Esophagus muscularis mucosa (tissue), 4 donors: ENCODE measurements at regions of chr18 and their contacts with region 1.

Region 1: GRCh38 chr18:9366192-9366591 is 31.6 kb downstream of the TWSG1 start:
- DNase-seq: no peak
- H3K4me3 ChIP-seq: no peak overlapping the region
- H3K27ac ChIP-seq: peak overlapping the region in 3 of 4 donors; percentile 28 to 58 (median 33)
- H3K4me1 ChIP-seq: peaks cover 0 to 46% (median 35%) of the 10 kb centered on the region in 4 donors
- H3K27me3 ChIP-seq: no peaks in the 10 kb centered on the region
- CTCF ChIP-seq: peak; percentile 24 to 37 (median 24)
- EP300 ChIP-seq: no peak
- POLR2A ChIP-seq: no peak

Region 2: GRCh38 chr18:8319798-8320489 is 1046.2 kb before region 1 on chr18:
- intact Hi-C with region 1: no loop called
- DNase-seq: no peak
- H3K4me3 ChIP-seq: no peak overlapping the region
- H3K27ac ChIP-seq: no peak overlapping the region
- H3K4me1 ChIP-seq: no peaks in the 10 kb centered on the region
- H3K27me3 ChIP-seq: no peaks in the 10 kb centered on the region
- CTCF ChIP-seq: no peak
- EP300 ChIP-seq: no peak
- POLR2A ChIP-seq: no peak

Region 3: GRCh38 chr18:9249254-9249653 is 116.9 kb before region 1 on chr18:
- intact Hi-C with region 1: no loop called
- DNase-seq: no peak
- H3K4me3 ChIP-seq: no peak overlapping the region
- H3K27ac ChIP-seq: no peak overlapping the region
- H3K4me1 ChIP-seq: no peaks in the 10 kb centered on the region
- H3K27me3 ChIP-seq: no peaks in the 10 kb centered on the region
- CTCF ChIP-seq: no peak
- EP300 ChIP-seq: no peak
- POLR2A ChIP-seq: no peak

Region 4: DNA sequence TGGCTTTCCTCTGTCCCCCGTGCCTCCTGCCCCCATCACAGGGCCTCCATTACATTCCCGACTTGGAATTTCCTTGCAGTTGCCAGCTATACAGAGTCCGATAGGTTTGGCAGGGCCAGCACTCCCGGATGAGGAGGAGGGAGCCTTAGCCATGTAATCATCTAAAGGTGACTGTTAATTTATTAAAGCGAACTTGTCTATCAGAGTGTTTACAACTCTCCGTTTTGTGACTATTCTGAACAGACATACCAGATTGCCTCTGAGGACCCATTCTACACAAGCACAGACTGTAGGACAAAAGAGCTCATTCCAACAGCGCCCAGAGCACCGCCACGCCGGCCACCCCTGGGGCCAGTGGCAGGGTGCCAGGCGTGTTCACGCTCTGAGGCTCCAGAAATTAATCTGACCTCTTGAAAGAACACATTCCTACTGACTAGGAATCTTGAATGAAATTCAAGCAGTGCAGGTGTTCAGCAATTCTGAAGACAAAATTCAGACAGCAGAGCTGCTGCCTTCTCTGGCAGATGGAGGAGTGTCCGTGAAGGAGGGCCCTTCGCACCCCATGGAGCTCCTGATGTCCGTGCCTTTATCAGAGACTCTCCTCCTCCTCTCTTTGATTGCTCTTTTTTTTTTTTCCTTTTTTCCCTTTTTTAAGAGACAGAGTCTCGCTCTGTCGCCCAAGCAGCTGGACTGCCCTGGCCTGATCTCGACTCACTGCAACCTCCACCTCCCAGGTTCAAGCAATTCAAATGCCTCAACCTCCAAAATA is 51.1 kb after region 1 on chr18:
- intact Hi-C with region 1: no loop called
- DNase-seq: peak; percentile 83
- H3K4me3 ChIP-seq: peak overlapping the region; percentile 29 to 47 (median 38)
- H3K27ac ChIP-seq: peak overlapping the region; percentile 56 to 72 (median 66)
- H3K4me1 ChIP-seq: peaks cover 7 to 25% (median 23%) of the 10 kb centered on the region in 4 donors
- H3K27me3 ChIP-seq: no peaks in the 10 kb centered on the region
- CTCF ChIP-seq: no peak
- EP300 ChIP-seq: no peak
- POLR2A ChIP-seq: no peak

Region 5: GRCh38 chr18:9474983-9475642 is 108.9 kb after region 1 on chr18 and contains the start of gene RALBP1:
- intact Hi-C with region 1: loop called (anchors 5 kb)
- DNase-seq: peak; percentile 99
- H3K4me3 ChIP-seq: peak within 1 kb of the TSS; percentile 82 to 94 (median 88)
- H3K27ac ChIP-seq: peak within 1 kb of the TSS; percentile 87 to 96 (median 92)
- H3K4me1 ChIP-seq: peaks cover 19 to 28% (median 20%) of the 10 kb centered on the region in 4 donors
- H3K27me3 ChIP-seq: no peaks in the 10 kb centered on the region
- CTCF ChIP-seq: peak in 2 of 3 experiments; percentile 39 to 51
- EP300 ChIP-seq: no peak
- POLR2A ChIP-seq: peak; percentile 53
- total RNA-seq, gene RALBP1: 103 to 164 (median 115) TPM

Region 6: GRCh38 chr18:9631814-9632496 is 265.8 kb after region 1 on chr18:
- intact Hi-C with region 1: no loop called
- DNase-seq: no peak
- H3K4me3 ChIP-seq: no peak overlapping the region
- H3K27ac ChIP-seq: peak overlapping the region in 3 of 4 donors; percentile 41 to 53 (median 50)
- H3K4me1 ChIP-seq: peaks cover 7 to 16% (median 9%) of the 10 kb centered on the region in 4 donors
- H3K27me3 ChIP-seq: no peaks in the 10 kb centered on the region
- CTCF ChIP-seq: no peak
- EP300 ChIP-seq: no peak
- POLR2A ChIP-seq: no peak